Left colon (tissue), 2 donors: ENCODE measurements at regions of chr6 and their contacts with region 1.

Region 1: GRCh38 chr6:168884646-168885086 is 369.0 kb downstream of the THBS2 start:
- DNase-seq: peak; percentile 46 to 79
- ATAC-seq: peak; percentile 92

Region 2: DNA sequence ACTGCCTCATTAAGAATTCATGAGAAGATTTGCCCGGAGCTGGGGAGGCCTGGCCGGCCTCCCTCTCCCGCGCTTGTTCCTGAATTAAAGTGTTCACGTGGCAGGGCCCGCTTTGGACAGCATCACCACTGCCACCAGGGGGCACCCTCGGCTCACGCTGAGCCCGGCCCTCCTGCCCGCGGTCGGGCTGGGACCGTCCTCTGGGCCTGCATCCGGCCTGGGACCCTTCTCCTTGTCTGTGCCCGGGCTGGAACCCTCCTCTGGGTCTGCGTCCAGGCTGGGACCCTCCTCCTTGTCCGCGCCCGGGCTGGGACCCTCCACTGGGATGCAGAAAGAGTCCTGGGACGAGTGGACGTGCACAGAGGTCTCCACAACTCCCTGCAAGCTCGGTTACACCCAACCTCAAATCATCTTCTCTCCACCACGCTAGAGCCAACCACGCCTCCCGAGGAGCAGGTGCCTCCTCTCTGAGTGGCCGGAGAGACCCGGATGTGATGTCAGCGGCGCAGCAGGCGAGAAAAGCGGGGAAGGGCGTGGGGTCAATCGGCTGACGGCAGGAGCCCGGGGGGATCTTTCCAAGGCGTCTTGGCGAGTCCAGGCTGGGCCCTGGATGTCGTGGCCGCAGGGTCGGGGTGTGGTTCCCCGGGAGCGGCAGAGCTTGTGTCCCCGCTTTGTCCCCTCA is 514.2 kb before region 1 on chr6:
- intact Hi-C with region 1: loop called (anchors 5 kb)
- DNase-seq: peak; percentile 66 to 88
- ATAC-seq: peak; percentile 83

Region 3: DNA sequence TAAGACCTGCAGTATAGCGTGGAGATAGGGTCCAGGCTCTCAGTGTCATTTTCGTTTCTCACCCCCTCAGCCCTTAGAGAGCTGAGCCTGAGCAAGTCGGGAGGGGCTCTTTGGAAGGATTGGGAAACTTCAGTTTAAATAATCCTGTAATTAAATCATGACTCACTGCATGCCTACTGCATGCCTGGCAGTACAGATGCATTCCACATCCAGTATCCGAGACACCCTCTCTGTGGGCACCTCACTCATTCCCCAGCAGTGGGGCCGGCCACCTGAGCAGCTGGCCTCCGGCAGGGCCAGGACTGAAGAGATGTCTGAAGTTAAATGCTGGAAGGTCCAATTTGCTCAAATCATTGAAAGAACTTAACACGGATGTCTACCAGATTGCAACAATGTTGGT is 52.4 kb after region 1 on chr6:
- intact Hi-C with region 1: no loop called
- DNase-seq: no peak
- ATAC-seq: no peak